Activated CD4-positive, alpha-beta memory T cell treated with anti-CD3 and anti-CD28 coated beads, Interleukin-2, amount 10 ng/mL, durations not matched to agents 7 days and 5 days (primary cell): ENCODE measurements at regions of chr12 and their contacts with region 1.

Region 1: GRCh38 chr12:11171145-11171968 is at the start of gene SMIM10L1:
- DNase-seq: peak; percentile 90
- H3K4me3 Mint-ChIP-seq: peak within 1 kb of the TSS; percentile 91
- H3K27ac Mint-ChIP-seq: peak within 1 kb of the TSS; percentile 96
- H3K4me1 Mint-ChIP-seq: peaks cover 49% of the 10 kb centered on the region
- H3K27me3 Mint-ChIP-seq: no peaks in the 10 kb centered on the region
- total RNA-seq, gene SMIM10L1: 8.3 TPM

Region 2: DNA sequence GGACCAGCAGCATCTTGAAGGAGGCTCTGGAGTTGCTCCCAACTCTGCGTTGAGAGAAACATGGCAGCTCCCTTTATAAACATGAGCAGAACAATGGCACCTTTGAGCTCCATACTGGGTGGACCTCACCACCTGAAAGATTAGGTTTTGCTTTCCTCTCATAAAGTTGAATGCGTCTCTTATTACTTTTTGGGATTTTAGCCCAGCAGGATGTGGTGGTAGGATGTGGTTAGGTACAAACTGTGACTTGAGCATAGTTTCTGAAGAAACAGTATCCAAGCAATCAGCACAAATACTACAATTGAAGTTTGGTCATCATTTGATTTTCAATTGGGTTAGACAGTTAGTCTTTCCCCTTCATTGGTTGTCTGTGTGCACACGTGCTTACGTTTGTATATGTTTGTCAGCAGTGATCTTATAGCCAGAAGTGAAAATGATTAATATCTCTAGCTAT is 321.9 kb before region 1 on chr12 and contains the start of gene PRR4:
- CTCF ChIA-PET with region 1: no interaction called
- POLR2A ChIA-PET with region 1: interaction called, 12 read pairs
- DNase-seq: peak; percentile 60
- H3K4me3 Mint-ChIP-seq: no peak within 1 kb of the TSS
- H3K27ac Mint-ChIP-seq: peak within 1 kb of the TSS; percentile 21
- H3K4me1 Mint-ChIP-seq: peaks cover 38% of the 10 kb centered on the region
- H3K27me3 Mint-ChIP-seq: no peaks in the 10 kb centered on the region
- total RNA-seq, gene PRR4: 0.68 to 0.98 TPM

Region 3: DNA sequence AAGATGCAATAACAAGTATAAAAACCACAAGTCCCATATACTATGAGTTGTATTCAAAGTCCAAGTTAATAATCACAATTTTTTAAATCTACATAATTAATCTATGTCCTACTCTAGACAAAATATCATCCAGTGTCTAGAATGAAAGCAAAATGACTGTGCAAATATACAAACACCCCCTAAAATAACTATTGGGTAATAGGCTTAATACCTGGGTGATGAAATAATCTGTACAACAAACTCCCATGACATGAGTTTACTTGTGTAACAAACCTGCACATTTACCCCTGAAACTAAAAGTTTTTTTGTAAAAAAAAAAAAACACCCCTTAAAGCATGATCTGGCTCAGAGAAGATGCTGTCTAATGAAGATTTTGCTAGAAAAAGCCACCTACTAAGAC is 11.2 kb after region 1 on chr12:
- CTCF ChIA-PET with region 1: no interaction called
- POLR2A ChIA-PET with region 1: interaction called, 10 read pairs
- DNase-seq: no peak
- H3K4me3 Mint-ChIP-seq: no peak overlapping the region
- H3K27ac Mint-ChIP-seq: no peak overlapping the region
- H3K4me1 Mint-ChIP-seq: peaks cover 2% of the 10 kb centered on the region
- H3K27me3 Mint-ChIP-seq: no peaks in the 10 kb centered on the region

Region 4: DNA sequence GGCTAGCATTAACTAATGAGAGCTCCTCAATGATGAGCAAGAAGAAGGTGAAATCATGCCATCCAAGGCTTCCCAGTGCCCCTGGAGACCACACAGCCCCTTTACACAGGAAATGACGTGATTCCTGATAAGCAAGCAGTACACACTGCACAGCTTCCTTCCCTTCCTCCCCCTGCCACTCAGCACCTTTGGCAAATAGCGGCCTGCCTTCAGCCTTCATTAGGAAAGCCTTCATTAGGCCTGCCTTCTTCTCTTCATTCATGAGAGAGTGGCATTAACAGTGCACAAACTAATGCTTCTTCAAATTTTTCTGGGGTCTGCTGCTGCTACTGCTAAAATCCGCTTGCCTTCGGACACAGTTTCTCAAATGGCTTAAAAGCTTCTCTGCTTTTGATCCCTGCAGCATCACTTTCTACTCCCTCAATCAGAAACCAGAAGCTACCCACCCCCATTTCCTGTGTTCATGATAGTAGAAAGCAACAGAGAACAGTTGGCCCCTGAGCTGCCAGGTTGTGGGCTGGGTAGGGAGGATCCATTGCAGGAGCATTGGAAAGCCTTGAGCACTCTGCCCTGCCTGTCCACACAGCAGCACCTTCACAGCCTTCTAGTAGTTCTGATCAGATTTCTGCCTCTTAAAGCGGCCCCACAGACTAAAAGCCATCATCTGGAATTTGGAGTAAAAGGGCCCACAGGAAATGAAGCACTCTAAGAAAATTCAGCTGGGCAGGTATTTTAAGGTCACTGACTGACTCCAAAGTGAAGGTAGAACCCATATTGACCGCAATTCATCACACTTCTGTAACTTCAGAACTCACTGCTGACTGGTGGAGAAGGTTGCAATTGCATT is 374.4 kb after region 1 on chr12:
- CTCF ChIA-PET with region 1: no interaction called
- POLR2A ChIA-PET with region 1: interaction called, 16 read pairs
- DNase-seq: peak; percentile 59
- H3K4me3 Mint-ChIP-seq: peak overlapping the region; percentile 9
- H3K27ac Mint-ChIP-seq: peak overlapping the region; percentile 90
- H3K4me1 Mint-ChIP-seq: peaks cover 36% of the 10 kb centered on the region
- H3K27me3 Mint-ChIP-seq: peaks cover 3% of the 10 kb centered on the region